ENCODE measurements at regions of chr9 and their contacts with region 1.

Region 1: GRCh38 chr9:108272349-108272899 is 583.4 kb downstream of the ACTL7B start:
- DNase-seq: peak; percentile 43 to 46
- ATAC-seq: peak; percentile 69 to 93 (median 86)
- H3K4me3 ChIP-seq: peak overlapping the region in 6 of 10 donors; percentile 1 to 42 (median 24)
- H3K27ac ChIP-seq: peak overlapping the region in 7 of 10 donors; percentile 10 to 71 (median 52)
- H3K4me1 ChIP-seq: peaks cover 0 to 23% (median 8%) of the 10 kb centered on the region in 9 donors
- H3K27me3 ChIP-seq: no peaks in the 10 kb centered on the region
- CTCF ChIP-seq: peak; percentile 49 to 76 (median 65)

Region 2: GRCh38 chr9:107465467-107466451 is 806.7 kb before region 1 on chr9:
- intact Hi-C with region 1: loop called in 4 of 10 experiments (anchors 5 to 10 kb)
- DNase-seq: peak; percentile 55 to 80
- ATAC-seq: peak; percentile 97 to 99 (median 98)
- H3K4me3 ChIP-seq: peak overlapping the region; percentile 30 to 76 (median 64)
- H3K27ac ChIP-seq: peak overlapping the region in 6 of 10 donors; percentile 28 to 66 (median 53)
- H3K4me1 ChIP-seq: peaks cover 0 to 14% (median 6%) of the 10 kb centered on the region in 9 donors
- H3K27me3 ChIP-seq: peaks cover 0 to 20% (median 0%) of the 10 kb centered on the region in 7 donors
- CTCF ChIP-seq: peak; percentile 82 to 97 (median 94)

Region 3: GRCh38 chr9:107484117-107484723 is 788.2 kb before region 1 on chr9:
- intact Hi-C with region 1: loop called in 7 of 10 experiments (anchors 1 to 5 kb)
- DNase-seq: peak in 1 of 2 donors; percentile 55
- ATAC-seq: peak; percentile 22 to 65 (median 52)
- H3K4me3 ChIP-seq: peak overlapping the region in 8 of 10 donors; percentile 60 to 94 (median 80)
- H3K27ac ChIP-seq: peak overlapping the region in 5 of 10 donors; percentile 3 to 98 (median 98)
- H3K4me1 ChIP-seq: peaks cover 0 to 61% (median 6%) of the 10 kb centered on the region in 9 donors
- H3K27me3 ChIP-seq: peaks cover 0 to 27% (median 0%) of the 10 kb centered on the region in 7 donors
- CTCF ChIP-seq: peak; percentile 27 to 78 (median 62)

Region 4: DNA sequence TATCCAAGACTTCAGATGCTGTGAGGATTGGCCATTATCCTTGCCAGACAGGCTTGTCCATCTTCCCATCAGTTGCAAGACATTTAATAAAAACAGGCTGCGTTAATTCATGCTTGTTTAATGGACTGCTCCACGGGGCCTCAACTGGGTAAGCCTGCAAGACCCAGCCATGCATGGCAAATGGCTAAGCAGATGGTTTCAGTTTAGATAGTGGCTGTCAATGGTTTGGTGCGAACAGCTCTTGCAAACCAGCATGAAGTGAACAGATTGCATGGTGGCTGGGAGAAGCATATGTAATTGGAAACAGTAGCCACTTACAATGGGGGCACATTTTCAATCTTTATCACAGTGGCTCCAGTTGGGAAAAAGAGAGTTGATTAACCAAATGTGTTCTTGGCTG is 154.6 kb before region 1 on chr9:
- intact Hi-C with region 1: loop called in 1 of 10 experiments (anchors 10 kb)
- DNase-seq: no peak
- ATAC-seq: no peak
- H3K4me3 ChIP-seq: no peak overlapping the region
- H3K27ac ChIP-seq: no peak overlapping the region
- H3K4me1 ChIP-seq: peaks cover 0 to 12% (median 0%) of the 10 kb centered on the region in 9 donors
- H3K27me3 ChIP-seq: no peaks in the 10 kb centered on the region
- CTCF ChIP-seq: no peak

Region 5: DNA sequence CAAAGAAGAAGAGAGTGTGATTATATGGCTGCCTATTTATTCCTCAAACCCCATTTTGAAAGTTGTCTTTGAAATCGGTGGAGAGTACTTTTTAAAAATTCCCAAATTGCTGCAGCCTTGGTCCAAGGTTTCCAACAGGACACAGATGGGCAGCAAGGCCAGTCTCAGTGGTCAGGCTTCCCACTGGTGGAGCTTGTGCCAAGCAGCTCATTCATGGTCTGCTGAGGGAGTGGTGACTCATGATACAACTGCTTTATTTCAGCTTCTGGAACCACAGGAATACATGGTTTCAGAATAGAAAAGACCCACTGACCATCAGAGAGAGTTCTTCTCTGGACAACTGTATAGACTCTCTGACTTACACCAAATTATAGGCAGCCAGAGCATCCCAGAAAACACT is 109.8 kb before region 1 on chr9:
- intact Hi-C with region 1: loop called in 2 of 10 experiments (anchors 5 to 10 kb)
- DNase-seq: no peak
- ATAC-seq: no peak
- H3K4me3 ChIP-seq: no peak overlapping the region
- H3K27ac ChIP-seq: no peak overlapping the region
- H3K4me1 ChIP-seq: peaks cover 0 to 10% (median 0%) of the 10 kb centered on the region in 9 donors
- H3K27me3 ChIP-seq: peaks cover 0 to 8% (median 0%) of the 10 kb centered on the region in 7 donors
- CTCF ChIP-seq: no peak

Region 6: DNA sequence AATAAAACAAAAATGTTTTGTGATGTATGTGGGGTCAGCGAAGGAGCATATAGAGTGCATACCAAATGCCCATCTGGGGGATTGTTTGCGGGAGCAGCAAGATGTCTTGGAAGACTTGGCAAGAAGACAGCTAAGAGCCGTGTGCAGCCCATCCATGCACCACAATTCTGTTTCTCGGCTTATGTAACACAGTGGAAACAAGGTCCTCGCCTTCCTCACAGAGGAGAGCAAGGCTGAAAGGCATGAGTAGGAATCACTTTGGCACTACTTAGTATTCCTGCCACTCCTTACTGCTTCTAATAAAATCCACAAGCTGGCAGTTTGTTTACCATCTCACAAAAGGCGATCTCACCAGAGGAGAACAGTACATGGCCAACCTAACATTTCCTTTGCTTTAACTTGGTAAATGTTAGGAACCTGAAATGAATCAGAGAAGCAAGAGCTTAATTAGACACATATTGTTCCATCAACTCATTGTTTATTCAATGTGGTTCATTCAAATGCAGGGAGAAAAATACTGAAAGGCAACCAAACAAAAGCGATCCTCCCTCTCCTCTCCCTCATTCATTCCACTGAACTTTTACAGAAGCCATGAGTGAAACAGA is 64.8 kb before region 1 on chr9:
- intact Hi-C with region 1: loop called in 1 of 10 experiments (anchors 10 kb)
- DNase-seq: no peak
- ATAC-seq: no peak
- H3K4me3 ChIP-seq: no peak overlapping the region
- H3K27ac ChIP-seq: no peak overlapping the region
- H3K4me1 ChIP-seq: no peaks in the 10 kb centered on the region
- H3K27me3 ChIP-seq: no peaks in the 10 kb centered on the region
- CTCF ChIP-seq: no peak

Region 7: DNA sequence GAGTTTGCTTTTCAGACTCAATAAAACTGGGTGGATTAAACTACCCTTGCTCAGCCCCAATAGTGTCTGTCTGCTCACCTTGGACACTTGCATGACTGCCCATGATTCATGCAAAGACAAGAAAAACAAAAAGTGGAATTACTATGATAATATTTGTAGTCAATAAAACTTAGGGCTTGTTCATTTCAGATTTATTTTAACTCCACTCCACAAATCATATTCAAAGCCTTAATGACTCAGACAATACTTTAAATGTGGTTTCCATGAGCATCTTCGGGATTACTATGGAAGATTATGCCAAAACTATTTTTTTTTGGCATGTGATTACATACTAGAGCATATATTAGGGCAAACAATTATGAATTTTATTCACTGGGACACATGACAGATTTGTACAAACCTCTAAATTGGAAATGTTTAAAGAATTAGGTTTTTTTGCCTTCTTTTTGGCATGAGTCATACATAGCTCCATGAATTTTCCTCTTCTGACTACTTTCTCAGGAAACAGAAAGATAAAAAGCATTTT is 114.5 kb after region 1 on chr9:
- intact Hi-C with region 1: no loop called
- DNase-seq: no peak
- ATAC-seq: no peak
- H3K4me3 ChIP-seq: no peak overlapping the region
- H3K27ac ChIP-seq: no peak overlapping the region
- H3K4me1 ChIP-seq: no peaks in the 10 kb centered on the region
- H3K27me3 ChIP-seq: no peaks in the 10 kb centered on the region
- CTCF ChIP-seq: no peak

Measured in heart right ventricle (tissue), 16 donors.